OCI-LY7 (cell line): ENCODE measurements at regions of chr16 and their contacts with region 1.

Region 1: DNA sequence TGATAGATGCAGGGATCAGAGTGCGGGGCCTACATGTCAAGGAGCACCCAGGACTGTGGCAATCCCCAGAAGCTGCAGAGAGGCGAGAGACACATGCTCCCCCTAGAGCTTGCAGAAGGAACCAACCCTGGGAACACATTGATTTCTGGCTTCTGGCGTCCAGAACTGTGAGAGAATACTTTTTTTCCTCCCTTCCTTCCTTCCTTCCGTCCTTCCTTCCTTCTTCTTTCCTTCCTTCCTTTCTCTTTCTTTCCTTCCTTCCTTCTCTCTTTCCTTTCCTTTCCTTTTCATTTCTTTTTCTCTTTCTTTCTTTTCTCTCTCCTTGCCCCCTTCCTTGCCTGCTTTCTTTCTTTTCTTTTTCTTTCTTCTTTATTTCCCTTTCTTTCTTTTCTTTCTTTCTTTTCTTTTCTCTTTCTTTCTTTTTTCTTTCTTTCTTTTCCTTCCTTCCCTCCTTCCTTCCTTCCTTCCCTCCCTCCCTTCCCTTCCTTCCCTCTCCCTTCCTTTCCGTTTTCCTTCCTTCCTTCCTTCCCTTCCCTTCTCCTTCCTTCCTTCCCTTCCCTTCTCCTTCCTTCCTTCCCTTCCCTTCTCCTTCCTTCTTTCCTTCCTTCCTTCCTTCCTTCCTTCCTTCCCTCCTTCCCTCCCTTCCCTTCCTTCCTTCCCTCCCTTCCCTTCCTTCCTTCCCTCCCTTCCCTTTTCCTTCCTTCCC is 134.3 kb downstream of the HAPSTR1 start:
- DNase-seq: peak; percentile 39
- H3K4me3 ChIP-seq: no peak overlapping the region
- H3K27ac ChIP-seq: no peak overlapping the region
- H3K4me1 ChIP-seq: no peaks in the 10 kb centered on the region
- CTCF ChIP-seq: peak; percentile 64

Region 2: GRCh38 chr16:9159839-9160550 is 65.8 kb before region 1 on chr16:
- CTCF ChIA-PET with region 1: no interaction called
- POLR2A ChIA-PET with region 1: no interaction called
- intact Hi-C with region 1: loop called (anchors 2 kb)
- DNase-seq: peak; percentile 58
- H3K4me3 ChIP-seq: no peak overlapping the region
- H3K27ac ChIP-seq: no peak overlapping the region
- H3K4me1 ChIP-seq: no peaks in the 10 kb centered on the region
- CTCF ChIP-seq: peak; percentile 81

Region 3: DNA sequence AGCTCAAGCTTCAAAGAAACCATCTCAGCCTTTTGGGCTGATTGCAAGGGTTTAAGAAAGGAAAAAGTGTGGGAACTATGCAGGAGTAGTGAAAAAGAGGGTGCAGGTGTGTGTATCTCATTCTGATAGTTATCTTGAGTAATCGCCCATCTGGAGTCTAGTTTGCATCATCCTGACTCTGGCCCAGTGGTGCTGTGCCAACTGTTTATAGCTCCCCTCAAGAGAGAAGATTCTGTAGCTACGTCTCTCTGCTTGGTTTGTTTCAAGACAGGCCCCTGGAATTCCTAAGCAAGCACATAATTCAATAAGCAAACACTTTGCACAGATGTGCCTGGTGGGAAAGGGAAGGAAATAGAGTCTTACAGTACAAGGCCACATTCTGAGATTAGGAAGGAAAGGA is 10.1 kb after region 1 on chr16:
- CTCF ChIA-PET with region 1: no interaction called
- POLR2A ChIA-PET with region 1: no interaction called
- intact Hi-C with region 1: no loop called
- DNase-seq: no peak
- H3K4me3 ChIP-seq: no peak overlapping the region
- H3K27ac ChIP-seq: no peak overlapping the region
- H3K4me1 ChIP-seq: no peaks in the 10 kb centered on the region
- CTCF ChIP-seq: no peak

Region 4: DNA sequence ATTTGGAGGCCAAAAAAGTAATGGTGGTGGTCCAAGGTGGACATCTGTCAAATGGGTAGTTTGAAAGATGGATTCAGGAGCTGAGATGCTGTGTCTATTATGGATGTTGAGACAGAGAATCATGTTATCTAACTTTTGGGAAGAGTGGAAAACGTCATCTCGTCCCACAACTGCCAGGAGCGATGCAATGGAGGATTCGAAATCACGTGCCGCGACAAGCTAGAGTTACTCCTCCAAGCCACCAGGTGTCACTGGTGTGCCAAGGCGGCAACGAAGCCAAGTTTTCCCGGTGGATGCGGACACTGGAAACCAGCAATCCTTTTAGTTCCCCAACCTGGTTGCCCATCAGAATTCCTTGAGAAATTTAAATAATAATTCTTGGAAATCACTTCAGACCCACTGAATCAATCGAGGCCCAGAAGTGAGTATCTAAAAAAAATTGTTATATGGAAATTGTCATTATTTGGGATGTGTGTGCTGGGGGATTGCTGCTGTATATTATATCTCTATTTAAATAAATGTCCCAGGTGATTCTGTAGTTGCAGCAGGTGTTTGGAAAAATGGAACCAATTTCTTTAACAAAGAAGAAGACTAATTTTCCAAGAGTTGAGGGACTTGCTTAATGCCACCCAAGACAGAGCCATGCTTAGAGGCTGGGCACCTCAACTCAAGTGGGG is 71.8 kb after region 1 on chr16:
- CTCF ChIA-PET with region 1: no interaction called
- POLR2A ChIA-PET with region 1: no interaction called
- intact Hi-C with region 1: no loop called
- DNase-seq: peak; percentile 12
- H3K4me3 ChIP-seq: no peak overlapping the region
- H3K27ac ChIP-seq: no peak overlapping the region
- H3K4me1 ChIP-seq: no peaks in the 10 kb centered on the region
- CTCF ChIP-seq: peak; percentile 80

Region 5: GRCh38 chr16:9869776-9870175 is 644.0 kb after region 1 on chr16:
- CTCF ChIA-PET with region 1: no interaction called
- POLR2A ChIA-PET with region 1: no interaction called
- intact Hi-C with region 1: no loop called
- DNase-seq: no peak
- H3K4me3 ChIP-seq: no peak overlapping the region
- H3K27ac ChIP-seq: no peak overlapping the region
- H3K4me1 ChIP-seq: no peaks in the 10 kb centered on the region
- CTCF ChIP-seq: no peak